ENCODE measurements at regions of chr20 and their contacts with region 1.

Region 1: DNA sequence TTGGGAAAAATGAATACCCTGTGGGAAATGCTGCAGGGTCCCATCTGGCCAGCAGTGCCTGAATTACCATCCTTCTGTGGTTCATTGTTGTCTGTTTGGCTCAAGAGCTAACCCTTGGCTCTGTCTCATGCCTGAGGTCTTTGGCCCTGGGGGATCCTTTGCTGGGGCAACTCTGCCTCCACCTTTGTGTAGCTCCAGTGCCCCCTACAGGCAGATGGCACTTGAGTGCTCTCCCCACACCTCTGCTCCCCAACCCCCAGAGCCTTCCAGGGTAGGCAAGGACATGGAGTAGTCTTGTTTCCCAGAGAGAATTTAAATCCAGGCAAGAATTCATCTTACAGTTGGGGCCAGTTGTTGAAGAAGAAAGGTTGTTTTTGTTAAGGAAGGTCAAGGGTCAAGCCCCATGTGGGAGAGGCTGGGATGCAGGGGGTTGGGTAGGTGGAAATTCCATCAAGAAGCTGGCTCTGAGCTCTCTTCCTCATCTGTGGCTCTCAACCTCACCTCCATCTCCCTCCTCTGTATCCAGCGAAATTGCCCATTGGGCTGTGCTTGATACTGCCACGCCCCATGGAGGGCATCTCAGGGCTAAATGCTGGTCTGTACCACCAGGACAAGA is 44.2 kb downstream of the ZNF831 start:
- DNase-seq: peak; percentile 91
- H3K4me3 Mint-ChIP-seq: no peak overlapping the region
- H3K27ac Mint-ChIP-seq: peak overlapping the region; percentile 32
- H3K4me1 Mint-ChIP-seq: peaks cover 30% of the 10 kb centered on the region
- H3K27me3 Mint-ChIP-seq: no peaks in the 10 kb centered on the region

Region 2: DNA sequence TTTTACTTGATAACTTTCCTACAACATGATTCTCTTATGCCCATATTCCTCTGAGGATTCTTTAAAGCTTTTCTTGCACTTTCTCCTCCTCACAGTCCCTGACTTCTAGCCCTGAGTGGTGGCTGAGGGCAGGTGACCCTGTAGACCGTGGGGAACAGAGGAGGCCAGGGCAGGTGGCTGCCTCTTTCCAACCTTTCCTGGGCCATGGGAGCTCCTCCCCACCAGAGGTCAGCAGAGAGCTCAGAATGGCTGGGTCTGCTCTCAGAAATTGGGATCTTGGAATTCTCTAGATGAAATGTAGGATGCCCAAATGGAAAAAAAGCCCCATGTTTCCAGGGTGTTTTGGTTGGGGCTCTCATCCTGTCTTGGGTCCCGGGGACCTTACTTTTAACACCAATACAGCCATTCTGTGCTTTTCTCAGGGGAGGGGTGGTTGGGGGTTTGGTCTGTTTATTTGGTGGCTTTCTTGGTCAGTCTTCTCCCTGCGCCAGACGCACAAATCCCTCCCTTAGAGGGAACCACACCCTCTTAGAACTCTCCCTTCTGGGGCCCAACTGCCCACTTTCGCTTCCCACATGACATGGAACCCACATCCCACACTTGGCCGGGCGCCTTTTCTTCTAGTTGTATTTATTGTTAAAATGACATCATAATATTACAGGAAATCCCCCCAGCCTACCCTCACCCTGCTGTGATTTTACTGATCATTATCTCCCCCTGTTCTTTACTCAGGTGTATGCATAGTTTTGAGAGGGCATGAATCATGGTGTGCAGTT is 337.4 kb before region 1 on chr20:
- CTCF ChIA-PET with region 1: interaction called, 11 read pairs
- intact Hi-C with region 1: loop called (anchors 5 kb)
- DNase-seq: peak; percentile 67
- H3K4me3 Mint-ChIP-seq: no peak overlapping the region
- H3K27ac Mint-ChIP-seq: no peak overlapping the region
- H3K4me1 Mint-ChIP-seq: peaks cover 4% of the 10 kb centered on the region
- H3K27me3 Mint-ChIP-seq: no peaks in the 10 kb centered on the region

Region 3: DNA sequence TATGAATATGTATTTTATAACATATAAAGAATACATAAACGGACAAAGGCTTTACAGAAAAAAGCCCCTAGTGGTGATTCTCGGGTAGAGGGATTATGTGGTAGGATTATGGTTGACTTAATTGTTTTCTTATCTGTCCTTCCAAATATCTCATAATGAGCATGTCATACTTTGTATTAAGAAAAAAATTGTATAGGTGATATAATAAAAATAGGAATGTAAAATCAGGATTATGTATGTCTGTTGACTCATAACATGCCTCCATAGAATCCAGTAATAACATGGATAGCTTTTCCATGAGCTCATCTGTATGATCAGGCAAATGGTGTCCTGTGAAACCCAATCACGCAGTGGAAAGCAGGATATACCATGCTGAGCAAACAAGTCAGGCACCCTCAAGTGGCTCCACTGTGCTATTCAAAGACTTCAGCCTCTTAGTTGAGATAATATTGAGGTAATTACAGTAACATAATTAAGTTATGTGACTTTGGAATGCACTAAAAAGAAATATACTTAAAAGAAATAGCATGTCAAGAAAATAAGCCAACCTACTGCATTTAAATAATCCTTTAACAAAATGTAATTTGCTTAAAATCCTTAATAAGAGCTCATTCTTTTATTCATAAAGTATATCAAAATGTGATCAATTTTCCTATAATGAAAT is 125.6 kb before region 1 on chr20:
- CTCF ChIA-PET with region 1: interaction called, 122 read pairs
- intact Hi-C with region 1: no loop called
- DNase-seq: no peak
- H3K4me3 Mint-ChIP-seq: no peak overlapping the region
- H3K27ac Mint-ChIP-seq: no peak overlapping the region
- H3K4me1 Mint-ChIP-seq: peaks cover 11% of the 10 kb centered on the region
- H3K27me3 Mint-ChIP-seq: peaks cover 5% of the 10 kb centered on the region

Region 4: GRCh38 chr20:59094576-59094975 is 113.3 kb before region 1 on chr20:
- CTCF ChIA-PET with region 1: interaction called, 122 read pairs
- intact Hi-C with region 1: no loop called
- DNase-seq: no peak
- H3K4me3 Mint-ChIP-seq: no peak overlapping the region
- H3K27ac Mint-ChIP-seq: no peak overlapping the region
- H3K4me1 Mint-ChIP-seq: peaks cover 2% of the 10 kb centered on the region
- H3K27me3 Mint-ChIP-seq: no peaks in the 10 kb centered on the region

Region 5: DNA sequence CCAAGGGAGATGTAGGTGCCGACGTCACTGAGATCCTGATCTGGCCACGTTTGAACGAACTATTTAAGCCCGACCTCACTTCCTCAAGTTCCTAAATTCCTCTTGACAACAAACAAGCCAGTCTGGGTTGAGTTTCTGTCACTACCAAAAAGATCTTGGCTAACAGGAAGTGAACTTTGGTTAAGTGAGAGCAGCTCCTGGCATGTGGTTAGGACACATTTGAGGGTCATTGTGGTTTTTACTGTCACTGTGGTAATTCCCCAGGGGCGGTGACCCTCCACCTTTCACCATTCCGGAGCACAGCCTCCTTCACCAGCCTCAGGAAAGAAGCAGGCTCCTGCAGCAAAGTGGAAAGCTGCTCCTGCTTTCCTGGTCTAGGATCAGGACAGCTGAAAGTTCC is 87.4 kb before region 1 on chr20:
- CTCF ChIA-PET with region 1: interaction called, 24 read pairs
- intact Hi-C with region 1: no loop called
- DNase-seq: peak; percentile 59
- H3K4me3 Mint-ChIP-seq: no peak overlapping the region
- H3K27ac Mint-ChIP-seq: no peak overlapping the region
- H3K4me1 Mint-ChIP-seq: peaks cover 75% of the 10 kb centered on the region
- H3K27me3 Mint-ChIP-seq: no peaks in the 10 kb centered on the region

Region 6: GRCh38 chr20:59177261-59178250 is 30.3 kb before region 1 on chr20:
- CTCF ChIA-PET with region 1: interaction called, 11 read pairs
- intact Hi-C with region 1: no loop called
- DNase-seq: peak; percentile 67
- H3K4me3 Mint-ChIP-seq: peak overlapping the region; percentile 52
- H3K27ac Mint-ChIP-seq: peak overlapping the region; percentile 91
- H3K4me1 Mint-ChIP-seq: peaks cover 81% of the 10 kb centered on the region
- H3K27me3 Mint-ChIP-seq: no peaks in the 10 kb centered on the region

Region 7: GRCh38 chr20:59232618-59233017 is 24.8 kb after region 1 on chr20:
- CTCF ChIA-PET with region 1: no interaction called
- intact Hi-C with region 1: no loop called
- DNase-seq: no peak
- H3K4me3 Mint-ChIP-seq: no peak overlapping the region
- H3K27ac Mint-ChIP-seq: no peak overlapping the region
- H3K4me1 Mint-ChIP-seq: peaks cover 6% of the 10 kb centered on the region
- H3K27me3 Mint-ChIP-seq: no peaks in the 10 kb centered on the region

Region 8: DNA sequence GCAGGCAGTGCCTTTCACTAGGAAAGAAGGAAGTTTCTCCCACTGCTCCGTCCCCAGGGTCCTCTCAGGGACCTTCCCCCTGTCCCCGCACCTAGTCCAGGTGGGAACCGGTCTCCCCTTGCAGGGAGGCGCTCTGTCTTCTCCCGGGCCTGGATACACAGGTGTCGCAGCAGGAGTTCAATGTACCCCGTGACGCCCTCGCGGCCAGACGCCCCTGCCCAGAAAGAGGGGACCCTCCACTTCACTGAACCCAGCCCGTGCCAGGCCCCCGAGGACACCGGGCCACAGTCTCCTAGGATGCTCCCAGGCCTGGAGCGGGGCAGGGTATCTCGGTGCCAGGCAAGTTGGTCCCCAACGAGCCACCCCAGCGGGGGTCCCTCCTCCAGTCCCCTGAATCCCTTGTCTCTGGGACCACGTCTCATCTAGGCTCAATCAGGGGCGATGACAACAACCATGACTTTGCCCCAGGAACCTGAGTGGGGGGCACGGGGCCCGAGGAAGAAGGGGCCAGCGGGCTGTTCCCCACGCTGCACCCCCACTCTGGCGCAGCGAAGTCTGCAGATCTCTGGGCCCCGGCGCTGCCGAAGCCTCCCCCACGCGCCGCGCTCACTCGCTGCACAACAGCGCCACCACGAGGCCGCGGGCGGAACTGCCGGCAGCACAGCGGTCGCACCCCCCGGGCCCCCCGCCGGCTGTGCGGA is 195.6 kb after region 1 on chr20:
- CTCF ChIA-PET with region 1: interaction called, 8 read pairs
- intact Hi-C with region 1: loop called (anchors 5 kb)
- DNase-seq: peak; percentile 72
- H3K4me3 Mint-ChIP-seq: no peak overlapping the region
- H3K27ac Mint-ChIP-seq: no peak overlapping the region
- H3K4me1 Mint-ChIP-seq: peaks cover 2% of the 10 kb centered on the region
- H3K27me3 Mint-ChIP-seq: peaks cover 8% of the 10 kb centered on the region

Measured in activated naive CD4-positive, alpha-beta T cell treated with anti-CD3 and anti-CD28 coated beads for 36 hours (primary cell).